PC-9 (cell line): ENCODE measurements at regions of chr1 and their contacts with region 1.

Region 1: DNA sequence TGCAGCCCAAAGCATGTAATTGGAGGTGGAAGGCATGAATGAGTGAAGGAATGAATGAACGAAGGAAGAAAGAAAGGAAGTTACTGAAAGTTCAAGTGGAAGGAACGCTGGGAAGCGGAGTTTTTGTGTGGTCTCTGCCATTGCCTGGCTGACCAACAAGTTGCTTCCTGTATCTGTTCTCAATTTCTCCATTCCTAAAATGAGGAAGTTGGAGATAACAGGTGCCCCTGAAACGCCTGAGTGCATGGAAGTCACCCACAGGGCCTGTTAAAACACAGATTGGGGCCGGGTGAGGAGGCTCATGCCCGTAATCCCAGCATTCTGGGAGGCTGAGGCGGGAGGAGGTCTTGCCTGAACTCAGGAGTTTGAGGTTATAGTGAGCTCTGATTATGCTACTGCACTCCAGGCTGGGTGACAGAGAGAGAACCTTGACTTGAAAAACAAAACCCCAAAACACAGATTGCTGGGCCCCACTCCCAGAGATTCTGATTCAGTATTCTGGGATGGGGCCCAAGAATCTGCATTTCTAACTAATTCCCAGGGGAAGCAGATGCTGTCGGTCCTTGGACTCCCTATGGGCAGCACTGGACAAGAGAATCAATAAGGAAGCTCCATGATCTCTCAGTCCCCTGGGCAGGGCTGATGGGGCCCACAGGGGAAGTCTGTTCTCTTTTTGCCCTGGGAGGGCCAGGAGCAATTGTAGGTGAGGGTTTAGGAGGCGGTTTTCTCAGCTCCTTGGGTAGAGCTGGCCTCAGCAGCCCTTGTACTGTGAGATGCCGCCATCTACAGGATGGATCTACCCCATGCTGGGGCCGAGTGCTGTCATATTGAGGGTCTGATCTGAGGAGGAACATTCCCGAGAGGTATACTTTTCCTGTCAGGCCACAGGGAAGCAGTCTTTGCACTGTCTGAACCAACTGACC is 3.3 kb upstream of the CNR2 start:
- DNase-seq: peak; percentile 60 to 74
- H3K4me3 ChIP-seq: no peak overlapping the region
- H3K27ac ChIP-seq: no peak overlapping the region
- H3K4me1 ChIP-seq: peaks cover 8% of the 10 kb centered on the region; the same call in 1 of the 2 replicates
- H3K27me3 ChIP-seq: no peaks in the 10 kb centered on the region
- CTCF ChIP-seq: peak; percentile 68

Region 2: GRCh38 chr1:23772049-23772853 is 144.2 kb before region 1 on chr1:
- CTCF ChIA-PET with region 1: interaction called, 26 read pairs
- POLR2A ChIA-PET with region 1: no interaction called
- intact Hi-C with region 1: loop called (anchors 1 kb)
- DNase-seq: peak; percentile 60 to 81
- H3K4me3 ChIP-seq: no peak overlapping the region
- H3K27ac ChIP-seq: no peak overlapping the region
- H3K4me1 ChIP-seq: peaks cover 11% of the 10 kb centered on the region; the same call in 1 of the 2 replicates
- H3K27me3 ChIP-seq: no peaks in the 10 kb centered on the region
- CTCF ChIP-seq: peak; percentile 82

Region 3: GRCh38 chr1:23809751-23810171 is 106.7 kb before region 1 on chr1:
- CTCF ChIA-PET with region 1: no interaction called
- POLR2A ChIA-PET with region 1: interaction called, 3 read pairs
- intact Hi-C with region 1: loop called (anchors 1 kb)
- DNase-seq: peak in 1 of 2 experiments; percentile 66
- H3K4me3 ChIP-seq: no peak overlapping the region
- H3K27ac ChIP-seq: no peak overlapping the region
- H3K4me1 ChIP-seq: no peaks in the 10 kb centered on the region
- H3K27me3 ChIP-seq: no peaks in the 10 kb centered on the region
- CTCF ChIP-seq: peak; percentile 68

Region 4: GRCh38 chr1:23989263-23989662 is 72.8 kb after region 1 on chr1:
- CTCF ChIA-PET with region 1: no interaction called
- POLR2A ChIA-PET with region 1: no interaction called
- intact Hi-C with region 1: no loop called
- DNase-seq: no peak
- H3K4me3 ChIP-seq: no peak overlapping the region
- H3K27ac ChIP-seq: no peak overlapping the region
- H3K4me1 ChIP-seq: peaks cover 3% of the 10 kb centered on the region
- H3K27me3 ChIP-seq: no peaks in the 10 kb centered on the region
- CTCF ChIP-seq: no peak

Region 5: DNA sequence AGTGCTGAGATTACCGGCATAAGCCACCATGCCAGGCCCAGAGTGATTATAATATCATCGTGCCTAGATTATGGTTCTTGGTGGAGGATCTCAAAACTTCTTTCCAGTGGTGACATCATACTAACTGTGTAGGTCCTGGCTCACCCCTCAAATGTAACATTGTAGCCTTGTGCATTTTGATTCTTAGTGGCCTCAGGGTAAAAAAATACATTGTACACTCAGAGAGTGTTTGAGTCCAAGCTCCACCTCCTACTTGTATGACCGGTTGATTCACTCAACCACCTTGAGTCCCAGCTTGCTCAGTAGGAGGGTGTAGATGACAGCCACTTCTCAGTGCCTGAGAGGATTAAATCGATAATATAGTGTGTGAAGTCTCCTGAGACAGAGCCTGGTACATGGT is 677.7 kb after region 1 on chr1:
- CTCF ChIA-PET with region 1: no interaction called
- POLR2A ChIA-PET with region 1: no interaction called
- intact Hi-C with region 1: no loop called
- DNase-seq: peak; percentile 34 to 72
- H3K4me3 ChIP-seq: no peak overlapping the region
- H3K27ac ChIP-seq: no peak overlapping the region
- H3K4me1 ChIP-seq: 0 out of 2 replicates have a peak, but pooled peaks cover 6% of the 10 kb centered on the region
- H3K27me3 ChIP-seq: no peaks in the 10 kb centered on the region
- CTCF ChIP-seq: no peak